Left cardiac atrium (tissue), 4 donors: ENCODE measurements at regions of chr9 and their contacts with region 1.

Region 1: DNA sequence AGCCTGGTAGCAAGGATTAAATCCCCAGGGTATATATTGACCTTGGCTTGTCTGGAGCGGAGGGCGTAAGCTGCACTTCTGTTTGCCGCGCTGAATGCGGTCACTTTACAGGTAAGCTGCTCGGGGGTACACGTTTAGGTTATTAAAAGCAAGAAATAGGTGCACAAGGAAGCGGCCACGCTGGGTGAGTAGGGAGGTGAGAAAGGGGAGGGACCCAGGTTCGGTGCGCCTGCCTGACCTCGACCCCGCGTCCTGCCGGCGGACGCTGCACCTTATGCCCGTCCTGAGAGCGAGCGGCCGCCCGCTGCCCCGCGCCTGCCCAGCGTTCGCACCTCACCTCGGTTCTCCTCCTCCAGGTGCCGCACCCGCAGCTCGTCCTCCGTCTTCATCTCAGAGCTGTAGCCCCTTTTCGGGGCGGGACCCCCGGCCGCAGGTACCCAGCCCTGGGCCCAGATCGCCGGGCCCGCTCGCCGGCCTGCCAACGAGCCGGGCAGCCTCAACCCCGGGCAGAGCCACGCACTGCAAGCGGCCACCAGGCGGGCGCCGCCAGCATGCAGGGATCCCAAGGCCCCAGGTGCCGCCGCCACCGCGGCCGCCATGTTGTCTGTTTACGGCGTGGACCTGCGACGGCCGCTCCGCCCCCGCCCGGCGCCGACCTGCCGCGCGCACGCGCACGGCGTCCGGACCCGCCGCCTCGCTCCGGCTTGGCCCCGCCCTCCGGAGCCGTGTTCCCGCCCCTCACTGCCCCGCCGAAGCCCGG is at the start of gene AUH:
- DNase-seq: peak; percentile 87
- ATAC-seq: peak; percentile 100
- total RNA-seq, gene AUH: 22.1 to 22.7 TPM

Region 2: GRCh38 chr9:90301277-90301653 is 1060.2 kb before region 1 on chr9:
- intact Hi-C with region 1: loop called in 1 of 2 experiments (anchors 10 kb)
- DNase-seq: peak; percentile 56
- ATAC-seq: peak in 1 of 2 donors; percentile 100

Region 3: DNA sequence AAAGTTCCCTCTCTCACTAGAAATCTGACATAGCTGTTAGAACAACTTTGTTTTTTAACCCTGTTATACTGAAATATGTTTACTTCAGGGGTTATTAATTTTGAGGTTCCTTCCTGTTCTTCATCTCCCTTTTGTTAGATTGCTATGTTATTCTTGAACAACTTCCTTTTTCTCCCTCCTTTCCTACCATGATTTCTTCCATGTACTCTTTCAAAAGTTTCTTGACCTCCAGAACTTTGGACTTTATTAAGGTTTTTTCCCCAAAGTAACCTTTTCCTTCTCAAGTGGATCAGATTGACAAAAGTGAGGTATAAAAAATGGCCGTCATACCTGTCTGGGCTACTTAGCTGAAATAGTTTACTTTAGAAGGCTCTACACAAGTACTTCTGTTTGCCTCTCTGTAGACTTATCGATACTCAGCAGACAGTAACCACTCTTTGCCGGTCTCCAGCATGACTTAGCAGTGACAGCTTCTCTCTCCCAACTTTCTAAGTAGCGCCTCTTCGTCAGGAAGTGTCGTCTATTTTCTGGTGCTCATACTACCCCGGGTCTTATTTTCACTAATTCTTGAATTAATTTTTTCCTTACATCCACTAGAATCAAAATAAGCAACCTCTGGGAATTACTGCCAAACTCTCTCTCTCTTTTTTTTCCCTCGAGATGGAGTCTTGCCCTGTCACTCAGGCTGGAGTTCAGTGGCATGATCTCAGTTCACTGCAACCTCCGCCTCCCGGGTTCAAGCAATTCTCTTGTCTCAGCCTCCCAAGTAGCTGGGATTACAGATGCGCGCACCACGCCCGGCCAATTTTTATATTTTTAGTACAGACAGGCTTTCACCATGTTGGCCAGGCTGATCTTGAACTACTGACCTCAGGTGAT is 42.4 kb after region 1 on chr9:
- intact Hi-C with region 1: loop called in 1 of 2 experiments (anchors 5 kb)
- DNase-seq: no peak
- ATAC-seq: no peak